ENCODE measurements at regions of chr3 and their contacts with region 1.

Region 1: GRCh38 chr3:21013566-21013965 is 737.4 kb downstream of the ZNF385D start:
- DNase-seq: no peak
- H3K4me3 ChIP-seq: no peak overlapping the region
- H3K27ac ChIP-seq: no peak overlapping the region
- H3K4me1 ChIP-seq: no peaks in the 10 kb centered on the region
- H3K27me3 ChIP-seq: no peaks in the 10 kb centered on the region
- CTCF ChIP-seq: no peak

Region 2: DNA sequence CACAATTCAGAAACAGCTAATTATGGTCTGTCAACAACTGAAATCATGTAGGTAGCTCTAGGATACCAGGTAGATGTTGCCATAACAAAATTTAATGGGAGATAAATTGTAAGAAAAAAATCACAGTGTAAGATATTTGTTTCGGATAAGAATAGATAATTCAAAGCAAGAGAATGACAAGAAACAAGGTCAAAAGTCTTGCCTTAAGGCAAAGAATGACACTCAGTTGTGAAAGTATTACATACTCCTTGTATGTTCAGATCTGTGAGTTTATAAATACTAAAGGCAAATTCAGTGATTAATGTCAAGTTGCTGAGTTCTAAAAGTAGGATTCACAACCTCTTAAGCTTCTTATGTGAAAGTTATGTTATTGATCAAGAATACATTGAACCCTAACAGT is 55.4 kb before region 1 on chr3:
- CTCF ChIA-PET with region 1: no interaction called
- POLR2A ChIA-PET with region 1: no interaction called
- intact Hi-C with region 1: no loop called
- DNase-seq: no peak
- H3K4me3 ChIP-seq: no peak overlapping the region
- H3K27ac ChIP-seq: no peak overlapping the region
- H3K4me1 ChIP-seq: no peaks in the 10 kb centered on the region
- H3K27me3 ChIP-seq: no peaks in the 10 kb centered on the region
- CTCF ChIP-seq: no peak

Region 3: GRCh38 chr3:20975188-20975651 is 38.3 kb before region 1 on chr3:
- CTCF ChIA-PET with region 1: no interaction called
- POLR2A ChIA-PET with region 1: no interaction called
- intact Hi-C with region 1: no loop called
- DNase-seq: no peak
- H3K4me3 ChIP-seq: no peak overlapping the region
- H3K27ac ChIP-seq: no peak overlapping the region
- H3K4me1 ChIP-seq: no peaks in the 10 kb centered on the region
- H3K27me3 ChIP-seq: no peaks in the 10 kb centered on the region
- CTCF ChIP-seq: no peak

Region 4: GRCh38 chr3:20999661-21000060 is 13.9 kb before region 1 on chr3:
- CTCF ChIA-PET with region 1: no interaction called
- POLR2A ChIA-PET with region 1: interaction called, 11 read pairs
- intact Hi-C with region 1: no loop called
- DNase-seq: no peak
- H3K4me3 ChIP-seq: no peak overlapping the region
- H3K27ac ChIP-seq: no peak overlapping the region
- H3K4me1 ChIP-seq: no peaks in the 10 kb centered on the region
- H3K27me3 ChIP-seq: no peaks in the 10 kb centered on the region
- CTCF ChIP-seq: no peak